Left lung (tissue), 14 donors: ENCODE measurements at regions of chr16 and their contacts with region 1.

Region 1: GRCh38 chr16:57300387-57301125 is 16.1 kb upstream of the PLLP start:
- DNase-seq: peak; percentile 97 to 100 (median 100)
- ATAC-seq: peak; percentile 95
- H3K4me3 ChIP-seq: peak overlapping the region; percentile 21 to 43
- H3K27ac ChIP-seq: peak overlapping the region; percentile 81 to 90
- H3K4me1 ChIP-seq: peaks cover 12 to 31% of the 10 kb centered on the region in 2 donors
- H3K27me3 ChIP-seq: peaks cover 0 to 3% of the 10 kb centered on the region in 2 donors
- CTCF ChIP-seq: peak; percentile 93 to 95

Region 2: GRCh38 chr16:57084257-57084770 is 216.2 kb before region 1 on chr16:
- intact Hi-C with region 1: loop called in 1 of 2 experiments (anchors 10 kb)
- DNase-seq: peak; percentile 54 to 86 (median 79)
- ATAC-seq: peak; percentile 98
- H3K4me3 ChIP-seq: no peak overlapping the region
- H3K27ac ChIP-seq: peak overlapping the region in 1 of 2 donors; percentile 81
- H3K4me1 ChIP-seq: peaks cover 3 to 20% of the 10 kb centered on the region in 2 donors
- H3K27me3 ChIP-seq: no peaks in the 10 kb centered on the region
- CTCF ChIP-seq: peak; percentile 95 to 98

Region 3: GRCh38 chr16:57115514-57116182 is 184.9 kb before region 1 on chr16:
- intact Hi-C with region 1: no loop called
- DNase-seq: peak in 2 of 4 donors; percentile 61 to 90
- ATAC-seq: peak; percentile 43
- H3K4me3 ChIP-seq: no peak overlapping the region
- H3K27ac ChIP-seq: peak overlapping the region; percentile 13 to 34
- H3K4me1 ChIP-seq: peaks cover 0 to 35% of the 10 kb centered on the region in 2 donors
- H3K27me3 ChIP-seq: no peaks in the 10 kb centered on the region
- CTCF ChIP-seq: no peak

Region 4: GRCh38 chr16:57413301-57413730 is 112.8 kb after region 1 on chr16:
- intact Hi-C with region 1: loop called (anchors 2 to 10 kb)
- DNase-seq: no peak
- ATAC-seq: no peak
- H3K4me3 ChIP-seq: no peak overlapping the region
- H3K27ac ChIP-seq: no peak overlapping the region
- H3K4me1 ChIP-seq: peaks cover 6 to 30% of the 10 kb centered on the region in 2 donors
- H3K27me3 ChIP-seq: no peaks in the 10 kb centered on the region
- CTCF ChIP-seq: no peak